Activated CD4-positive, alpha-beta T cell treated with anti-CD3 and anti-CD28 coated beads for 36 hours (primary cell): ENCODE measurements at regions of chr7 and their contacts with region 1.

Region 1: DNA sequence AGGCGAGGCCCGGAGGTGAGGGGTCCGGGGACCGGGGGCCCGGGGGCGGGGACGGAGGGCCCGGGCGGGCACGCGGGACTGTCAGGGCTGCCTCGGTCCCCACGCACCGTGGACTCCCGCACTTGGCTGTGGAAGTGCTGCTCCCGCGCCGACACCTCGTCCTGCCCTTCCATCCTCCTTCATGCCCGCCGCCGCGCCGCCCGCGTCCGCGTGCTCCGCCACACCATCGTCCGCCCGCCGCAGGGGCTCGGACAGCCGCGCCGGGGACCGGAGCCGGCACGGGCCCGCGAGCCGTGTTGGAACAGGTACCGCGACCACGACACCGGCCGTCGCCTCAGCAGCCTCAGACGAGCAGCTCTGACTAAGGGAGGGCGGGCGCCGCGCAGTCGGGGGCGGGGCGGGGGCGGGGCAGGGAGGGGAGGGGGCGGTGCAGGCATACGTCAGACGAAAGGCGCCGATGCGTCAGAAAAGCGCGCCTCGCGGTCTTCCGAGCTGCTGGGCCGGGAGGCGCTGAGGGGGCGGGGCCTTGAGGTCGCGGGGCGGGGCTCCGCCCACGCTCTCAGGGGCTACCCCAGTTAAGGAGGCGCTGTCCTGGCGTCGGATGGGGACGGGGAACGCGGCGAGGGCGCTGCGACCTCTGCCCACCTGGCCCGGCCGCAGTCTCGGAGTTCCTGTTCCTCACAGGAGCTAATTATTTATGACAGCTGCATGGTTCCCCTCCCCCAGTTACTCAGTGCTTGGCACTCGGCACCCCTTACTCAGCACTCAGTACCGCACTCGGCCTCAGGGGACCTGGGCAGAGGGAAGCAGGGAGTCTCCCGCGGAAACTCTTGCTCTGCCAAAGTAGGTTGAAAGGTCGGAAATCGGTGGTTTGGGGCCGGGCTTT is at the start of gene LMBR1:
- DNase-seq: peak; percentile 97
- ATAC-seq: peak; percentile 89
- H3K4me3 Mint-ChIP-seq: peak within 1 kb of the TSS; percentile 88
- H3K27ac Mint-ChIP-seq: peak within 1 kb of the TSS; percentile 90
- H3K4me1 Mint-ChIP-seq: peaks cover 38% of the 10 kb centered on the region
- H3K27me3 Mint-ChIP-seq: no peaks in the 10 kb centered on the region
- total RNA-seq, gene LMBR1: 31.0 to 39.0 TPM

Region 2: DNA sequence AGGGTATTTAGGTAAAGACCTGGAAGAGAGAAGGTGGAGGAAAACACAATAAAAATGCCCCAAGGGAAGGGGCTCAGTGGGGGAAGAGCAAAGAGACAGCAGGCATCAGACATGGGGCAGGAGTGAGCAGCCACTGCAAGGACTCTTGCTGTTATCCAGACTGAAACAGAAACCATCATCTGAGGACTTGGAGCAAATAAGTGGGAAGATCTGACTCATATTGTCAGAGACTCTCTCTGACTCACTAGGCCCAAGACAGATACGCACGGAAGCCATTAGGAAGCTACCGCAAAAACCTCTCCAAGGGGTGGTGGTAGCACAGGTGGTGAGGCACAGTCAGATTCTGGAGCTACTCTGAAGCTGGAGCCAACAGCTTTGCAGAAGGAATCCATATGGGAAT is 141.7 kb before region 1 on chr7:
- CTCF ChIA-PET with region 1: no interaction called
- POLR2A ChIA-PET with region 1: no interaction called
- intact Hi-C with region 1: loop called in 1 of 2 experiments (anchors 1 kb)
- DNase-seq: peak; percentile 72
- ATAC-seq: peak; percentile 94
- H3K4me3 Mint-ChIP-seq: no peak overlapping the region
- H3K27ac Mint-ChIP-seq: no peak overlapping the region
- H3K4me1 Mint-ChIP-seq: peaks cover 16% of the 10 kb centered on the region
- H3K27me3 Mint-ChIP-seq: no peaks in the 10 kb centered on the region

Region 3: DNA sequence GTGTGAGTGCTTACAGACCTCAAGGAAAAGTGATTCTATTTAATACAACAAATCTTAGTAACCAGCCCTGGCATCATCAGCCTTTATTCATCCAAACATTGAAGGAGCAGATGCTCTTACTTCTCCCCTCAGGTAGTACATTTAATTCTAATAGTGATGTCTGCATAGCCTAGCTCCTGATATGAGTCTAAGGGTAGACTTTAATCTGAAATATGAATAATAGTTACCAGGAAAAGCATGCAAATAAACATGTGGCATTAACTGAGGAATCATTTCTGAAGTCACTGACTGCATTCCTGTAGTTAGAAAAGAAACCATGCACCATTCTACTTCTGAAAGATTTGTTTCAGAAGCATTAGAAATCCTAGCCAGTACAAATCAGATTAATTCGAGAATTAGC is 25.6 kb after region 1 on chr7:
- CTCF ChIA-PET with region 1: interaction called, 4 read pairs
- POLR2A ChIA-PET with region 1: no interaction called
- intact Hi-C with region 1: loop called (anchors 1 kb)
- DNase-seq: no peak
- ATAC-seq: peak; percentile 74
- H3K4me3 Mint-ChIP-seq: no peak overlapping the region
- H3K27ac Mint-ChIP-seq: peak overlapping the region; percentile 76
- H3K4me1 Mint-ChIP-seq: peaks cover 35% of the 10 kb centered on the region
- H3K27me3 Mint-ChIP-seq: peaks cover 27% of the 10 kb centered on the region

Region 4: GRCh38 chr7:157138424-157139110 is 245.5 kb after region 1 on chr7 and contains the start of gene UBE3C:
- CTCF ChIA-PET with region 1: no interaction called
- POLR2A ChIA-PET with region 1: interaction called, 3 read pairs
- intact Hi-C with region 1: loop called (anchors 1 to 2 kb)
- DNase-seq: peak; percentile 94
- ATAC-seq: peak; percentile 87
- H3K4me3 Mint-ChIP-seq: peak within 1 kb of the TSS; percentile 84
- H3K27ac Mint-ChIP-seq: peak within 1 kb of the TSS; percentile 89
- H3K4me1 Mint-ChIP-seq: peaks cover 41% of the 10 kb centered on the region
- H3K27me3 Mint-ChIP-seq: no peaks in the 10 kb centered on the region
- total RNA-seq, gene UBE3C: 53.9 to 60.7 TPM

Region 5: DNA sequence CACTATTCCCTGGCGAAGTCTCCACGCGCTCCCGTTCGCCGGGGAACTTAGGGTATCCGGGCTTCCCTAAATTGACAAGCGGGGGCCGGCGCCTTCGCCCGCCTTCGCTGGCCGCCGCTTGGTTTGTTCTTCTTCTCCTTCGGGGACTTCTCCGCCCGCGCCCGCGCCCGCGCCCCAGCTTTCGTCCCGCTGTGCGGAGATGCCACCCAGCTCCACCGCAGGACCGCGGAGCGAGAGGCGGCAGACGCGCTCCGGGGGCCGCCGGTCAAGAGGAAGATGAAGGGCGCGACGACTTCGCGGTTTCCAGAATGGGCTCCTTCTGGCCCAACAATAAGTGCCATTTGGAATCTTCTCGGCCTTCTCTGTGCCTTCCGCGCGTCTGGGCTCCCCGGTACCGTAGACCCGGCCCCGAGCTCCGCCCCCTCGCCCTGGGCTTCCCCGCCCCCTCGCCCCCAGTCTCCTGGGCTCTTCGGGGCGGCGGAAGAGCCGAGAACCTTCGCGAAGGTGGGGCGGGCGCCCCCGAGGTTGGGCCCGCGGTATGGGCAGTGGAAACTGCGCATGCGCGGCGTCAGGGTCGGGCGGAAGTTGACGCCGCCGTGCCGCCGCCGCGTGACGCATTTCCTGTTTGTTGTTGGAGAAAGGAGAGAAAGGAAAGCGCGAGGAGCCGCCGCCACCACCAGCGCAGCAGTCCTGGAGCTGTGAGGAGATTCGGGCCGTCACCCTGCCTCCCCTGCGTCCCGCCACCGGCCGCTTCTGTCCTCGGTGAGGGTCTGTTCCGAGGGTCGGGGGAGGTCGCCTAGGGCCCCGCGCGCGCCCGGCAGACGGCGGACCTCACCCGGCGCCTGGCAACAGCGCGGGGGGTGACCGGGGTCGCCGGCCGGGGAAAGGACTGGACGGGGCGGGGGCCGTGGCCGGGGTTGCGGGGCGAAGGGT is 443.6 kb after region 1 on chr7 and contains the start of gene DNAJB6:
- CTCF ChIA-PET with region 1: interaction called, 5 read pairs
- POLR2A ChIA-PET with region 1: no interaction called
- intact Hi-C with region 1: loop called in 1 of 2 experiments (anchors 1 kb)
- DNase-seq: peak; percentile 97
- ATAC-seq: peak; percentile 75
- H3K4me3 Mint-ChIP-seq: peak within 1 kb of the TSS; percentile 90
- H3K27ac Mint-ChIP-seq: peak within 1 kb of the TSS; percentile 96
- H3K4me1 Mint-ChIP-seq: peaks cover 40% of the 10 kb centered on the region
- H3K27me3 Mint-ChIP-seq: no peaks in the 10 kb centered on the region
- total RNA-seq, gene DNAJB6: 89.9 to 92.9 TPM